ENCODE measurements at regions of chr1 and their contacts with region 1.

Region 1: DNA sequence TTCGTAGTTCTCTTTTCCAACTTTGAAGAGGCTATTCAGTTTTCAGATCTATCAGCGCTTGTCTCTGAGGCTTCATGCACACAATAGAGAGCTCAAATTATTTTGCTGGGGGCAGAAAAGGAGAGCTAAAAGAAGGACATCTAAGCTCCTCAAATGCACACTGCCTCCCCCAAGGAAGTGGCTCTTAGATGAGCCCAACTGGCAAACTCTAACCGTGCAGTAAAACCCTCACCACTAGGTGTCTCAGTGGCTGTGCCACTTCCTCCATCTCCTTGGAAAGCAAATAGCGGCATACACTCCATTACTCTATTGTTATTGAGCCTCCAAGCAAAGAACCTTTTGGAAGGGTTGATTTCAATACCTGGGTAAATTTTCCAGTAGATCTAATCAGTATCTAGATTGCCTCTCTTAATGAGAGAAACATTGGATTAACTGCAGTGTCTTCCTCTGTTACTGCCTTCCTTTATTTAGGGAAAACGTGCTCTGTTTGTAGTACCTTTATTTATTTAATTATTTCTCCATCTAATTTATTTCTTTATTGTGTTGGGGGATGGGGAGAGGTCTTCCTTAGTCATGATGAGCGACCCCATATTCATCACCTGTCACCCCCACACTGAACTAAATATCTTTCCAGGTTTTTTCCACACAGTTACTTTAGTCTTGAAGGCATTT is 9.2 kb upstream of the SFPQ start:
- DNase-seq: peak; percentile 23 to 80 (median 72)
- ATAC-seq: peak; percentile 100
- H3K4me3 ChIP-seq: no peak overlapping the region
- H3K4me3 Mint-ChIP-seq: peak overlapping the region in 1 of 10 donors; percentile 25
- H3K27ac ChIP-seq: no peak overlapping the region
- H3K27ac Mint-ChIP-seq: peak overlapping the region in 3 of 9 donors; percentile 46 to 79 (median 51)
- H3K4me1 ChIP-seq: peaks cover 0 to 8% of the 10 kb centered on the region in 2 donors
- H3K4me1 Mint-ChIP-seq: peaks cover 3 to 13% (median 9%) of the 10 kb centered on the region in 7 donors
- H3K27me3 ChIP-seq: peaks cover 0 to 4% of the 10 kb centered on the region in 2 donors
- H3K27me3 Mint-ChIP-seq: peaks cover 0 to 32% (median 0%) of the 10 kb centered on the region in 5 donors

Region 2: GRCh38 chr1:35220976-35221375 is 18.8 kb after region 1 on chr1:
- CTCF ChIA-PET with region 1: no interaction called
- POLR2A ChIA-PET with region 1: interaction called, 3 read pairs
- intact Hi-C with region 1: loop called in 1 of 2 experiments (anchors 1 kb)
- DNase-seq: peak in 6 of 9 donors; percentile 7 to 24 (median 14)
- ATAC-seq: peak; percentile 57
- H3K4me3 ChIP-seq: no peak overlapping the region
- H3K4me3 Mint-ChIP-seq: no peak overlapping the region
- H3K27ac ChIP-seq: no peak overlapping the region
- H3K27ac Mint-ChIP-seq: no peak overlapping the region
- H3K4me1 ChIP-seq: no peaks in the 10 kb centered on the region
- H3K4me1 Mint-ChIP-seq: peaks cover 0 to 5% (median 0%) of the 10 kb centered on the region in 7 donors
- H3K27me3 ChIP-seq: no peaks in the 10 kb centered on the region
- H3K27me3 Mint-ChIP-seq: peaks cover 0 to 3% (median 0%) of the 10 kb centered on the region in 5 donors

Region 3: GRCh38 chr1:35287807-35288640 is 85.8 kb after region 1 on chr1:
- CTCF ChIA-PET with region 1: interaction called, 13 read pairs
- POLR2A ChIA-PET with region 1: interaction called, 3 read pairs
- intact Hi-C with region 1: no loop called
- DNase-seq: no peak
- ATAC-seq: no peak
- H3K4me3 ChIP-seq: no peak overlapping the region
- H3K4me3 Mint-ChIP-seq: peak overlapping the region in 7 of 10 donors; percentile 7 to 63 (median 9)
- H3K27ac ChIP-seq: no peak overlapping the region
- H3K27ac Mint-ChIP-seq: peak overlapping the region in 7 of 9 donors; percentile 14 to 78 (median 51)
- H3K4me1 ChIP-seq: peaks cover 0 to 17% of the 10 kb centered on the region in 2 donors
- H3K4me1 Mint-ChIP-seq: peaks cover 25 to 63% (median 53%) of the 10 kb centered on the region in 7 donors
- H3K27me3 ChIP-seq: no peaks in the 10 kb centered on the region
- H3K27me3 Mint-ChIP-seq: no peaks in the 10 kb centered on the region

Region 4: DNA sequence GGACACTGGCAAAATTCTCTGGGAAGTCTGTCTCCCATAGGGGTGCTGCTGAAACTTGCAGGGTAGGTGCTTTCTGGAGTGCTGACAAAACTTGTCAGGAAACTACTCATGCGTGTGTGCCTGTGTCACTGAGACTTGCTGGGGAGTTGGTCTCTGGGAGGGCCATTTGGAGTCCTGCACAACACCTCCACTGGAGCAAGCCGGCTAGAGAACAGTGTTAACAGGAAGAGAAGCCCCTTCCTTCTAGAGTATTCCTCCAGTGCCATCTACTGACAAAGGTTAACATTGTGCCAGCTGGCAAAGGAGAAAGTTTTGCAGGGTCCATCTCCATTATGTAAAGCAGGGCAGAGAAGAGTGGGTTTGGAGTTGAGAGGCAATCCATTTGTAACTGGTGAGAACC is 96.3 kb after region 1 on chr1:
- CTCF ChIA-PET with region 1: interaction called, 17 read pairs
- POLR2A ChIA-PET with region 1: no interaction called
- intact Hi-C with region 1: loop called (anchors 1 kb)
- DNase-seq: peak in 7 of 9 donors; percentile 43 to 68 (median 60)
- ATAC-seq: peak; percentile 92
- H3K4me3 ChIP-seq: no peak overlapping the region
- H3K4me3 Mint-ChIP-seq: no peak overlapping the region
- H3K27ac ChIP-seq: no peak overlapping the region
- H3K27ac Mint-ChIP-seq: peak overlapping the region in 5 of 9 donors; percentile 26 to 72 (median 62)
- H3K4me1 ChIP-seq: no peaks in the 10 kb centered on the region
- H3K4me1 Mint-ChIP-seq: peaks cover 6 to 26% (median 14%) of the 10 kb centered on the region in 7 donors
- H3K27me3 ChIP-seq: no peaks in the 10 kb centered on the region
- H3K27me3 Mint-ChIP-seq: no peaks in the 10 kb centered on the region

Region 5: DNA sequence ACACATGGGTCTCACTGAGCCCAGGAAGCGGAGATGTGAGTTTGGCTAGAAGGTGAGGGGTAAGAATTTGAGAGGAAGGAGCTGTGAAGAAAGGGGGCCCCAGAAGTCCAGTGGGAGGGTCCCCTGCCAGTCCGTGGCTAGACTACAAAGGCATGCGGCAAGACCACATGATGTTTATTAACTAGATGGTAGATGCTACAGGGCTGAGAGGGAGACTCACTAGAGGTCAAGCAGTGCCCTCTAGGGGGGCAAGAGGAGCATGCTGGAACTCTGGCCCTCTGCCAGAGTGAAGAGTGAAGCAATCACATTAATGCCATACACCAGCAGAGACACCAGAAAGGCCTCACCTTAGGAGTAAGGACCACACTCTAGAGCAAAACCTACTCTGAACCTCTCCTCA is 342.8 kb after region 1 on chr1:
- CTCF ChIA-PET with region 1: no interaction called
- POLR2A ChIA-PET with region 1: no interaction called
- intact Hi-C with region 1: loop called in 1 of 2 experiments (anchors 5 kb)
- DNase-seq: peak in 6 of 9 donors; percentile 34 to 69 (median 58)
- ATAC-seq: peak; percentile 90
- H3K4me3 ChIP-seq: no peak overlapping the region
- H3K4me3 Mint-ChIP-seq: peak overlapping the region in 4 of 10 donors; percentile 0 to 26 (median 16)
- H3K27ac ChIP-seq: peak overlapping the region; percentile 12
- H3K27ac Mint-ChIP-seq: peak overlapping the region in 7 of 9 donors; percentile 3 to 93 (median 67)
- H3K4me1 ChIP-seq: peaks cover 10 to 13% of the 10 kb centered on the region in 2 donors
- H3K4me1 Mint-ChIP-seq: peaks cover 49 to 89% (median 78%) of the 10 kb centered on the region in 7 donors
- H3K27me3 ChIP-seq: no peaks in the 10 kb centered on the region
- H3K27me3 Mint-ChIP-seq: no peaks in the 10 kb centered on the region

Region 6: GRCh38 chr1:36486436-36487335 is 1284.5 kb after region 1 on chr1:
- CTCF ChIA-PET with region 1: no interaction called
- POLR2A ChIA-PET with region 1: no interaction called
- intact Hi-C with region 1: no loop called
- DNase-seq: no peak
- ATAC-seq: peak; percentile 81
- H3K4me3 ChIP-seq: no peak overlapping the region
- H3K4me3 Mint-ChIP-seq: no peak overlapping the region
- H3K27ac ChIP-seq: no peak overlapping the region
- H3K27ac Mint-ChIP-seq: no peak overlapping the region
- H3K4me1 ChIP-seq: peaks cover 0 to 4% of the 10 kb centered on the region in 2 donors
- H3K4me1 Mint-ChIP-seq: peaks cover 8 to 28% (median 19%) of the 10 kb centered on the region in 7 donors
- H3K27me3 ChIP-seq: no peaks in the 10 kb centered on the region
- H3K27me3 Mint-ChIP-seq: peaks cover 0 to 12% (median 5%) of the 10 kb centered on the region in 5 donors